ENCODE measurements at regions of chr7 and their contacts with region 1.

Region 1: GRCh38 chr7:98280791-98281756 is at the start of gene BRI3:
- DNase-seq: peak; percentile 96

Region 2: GRCh38 chr7:98186452-98187137 is 94.5 kb before region 1 on chr7:
- in situ Hi-C with region 1: no loop called
- DNase-seq: no peak

Region 3: DNA sequence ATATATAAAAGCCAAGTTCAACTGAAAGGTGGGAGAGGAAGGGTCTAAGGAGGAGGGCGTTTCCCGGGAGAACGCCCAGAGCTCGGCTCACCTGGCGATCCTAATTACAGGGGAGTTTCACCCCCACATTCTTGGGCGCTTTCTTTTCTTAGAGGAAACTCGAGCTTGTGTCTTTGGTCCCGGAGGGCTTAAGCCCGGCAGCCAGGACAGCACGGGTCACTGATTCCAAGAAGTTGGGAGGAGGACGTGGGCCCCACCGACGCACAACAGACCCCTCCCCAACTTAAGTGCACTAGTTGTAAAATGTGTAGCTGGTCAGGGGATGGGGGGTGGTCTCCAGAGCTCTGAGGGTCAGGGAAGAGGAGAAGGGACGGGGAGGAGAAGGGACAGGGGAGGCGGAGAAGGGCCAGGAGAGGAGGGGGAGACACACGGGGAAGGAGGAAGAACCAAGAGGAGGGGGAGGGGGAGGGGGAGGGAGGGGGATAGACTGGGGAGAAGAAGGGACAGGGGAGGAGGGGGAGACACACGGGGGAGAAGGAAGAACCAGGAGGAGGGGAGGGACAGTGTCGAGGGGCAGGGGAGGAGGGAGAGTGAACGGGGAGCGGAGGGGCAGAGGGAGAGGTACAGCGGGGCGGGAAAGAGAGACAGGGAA is 118.9 kb after region 1 on chr7:
- in situ Hi-C with region 1: loop called (anchors 25 kb)
- DNase-seq: peak; percentile 58

Region 4: DNA sequence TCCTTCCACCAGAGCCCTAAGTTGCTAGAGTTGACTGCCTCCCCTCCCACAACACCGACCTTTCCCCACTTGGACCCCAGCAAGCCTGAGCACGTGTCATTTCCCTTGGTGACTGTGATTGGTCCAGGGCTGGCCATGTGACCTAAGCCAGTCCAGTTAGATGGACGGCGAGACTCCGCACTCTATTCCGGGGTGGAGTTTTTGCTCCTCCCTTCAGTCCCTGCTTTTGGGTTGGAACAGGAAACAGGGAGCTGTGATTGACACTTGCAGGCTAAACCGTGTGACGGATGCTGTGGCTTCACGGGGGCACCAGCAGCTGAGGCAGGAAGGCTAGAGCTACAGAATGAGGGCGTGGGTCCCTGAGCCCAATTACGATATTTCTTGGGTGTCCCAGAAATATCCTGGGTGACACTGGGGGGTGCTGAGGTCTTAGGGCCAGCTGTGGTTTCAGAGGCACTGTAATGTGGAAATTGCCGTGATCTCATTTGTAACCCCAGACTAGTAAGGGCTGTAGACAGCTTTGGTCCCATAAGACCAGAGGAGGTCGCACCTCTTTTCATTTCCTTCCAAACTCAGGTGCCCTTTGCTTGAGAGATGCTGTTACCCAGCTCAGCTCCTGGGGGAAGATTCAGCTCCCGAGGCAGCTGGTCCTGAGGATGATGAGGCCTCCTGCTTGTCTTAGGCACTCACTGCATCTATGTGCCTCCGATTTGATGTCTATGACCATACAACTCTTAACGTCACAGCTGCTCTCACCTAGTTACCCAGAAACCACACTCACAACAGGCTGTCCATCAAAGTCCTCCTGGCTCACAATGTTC is 233.3 kb after region 1 on chr7:
- in situ Hi-C with region 1: no loop called
- DNase-seq: no peak